ENCODE measurements at regions of chr1 and their contacts with region 1.

Region 1: GRCh38 chr1:5992026-5992813 is at the start of gene NPHP4:
- DNase-seq: peak; percentile 99 to 100
- H3K4me3 ChIP-seq: peak within 1 kb of the TSS; percentile 79 to 94
- H3K27ac ChIP-seq: peak within 1 kb of the TSS; percentile 85 to 89
- H3K4me1 ChIP-seq: peaks cover 0 to 15% of the 10 kb centered on the region in 2 donors
- H3K27me3 ChIP-seq: no peaks in the 10 kb centered on the region
- CTCF ChIP-seq: peak in 1 of 3 experiments; percentile 5
- total RNA-seq, gene NPHP4: 8.2 TPM

Region 2: GRCh38 chr1:5811419-5811818 is 180.8 kb before region 1 on chr1:
- intact Hi-C with region 1: no loop called
- DNase-seq: no peak
- H3K4me3 ChIP-seq: no peak overlapping the region
- H3K27ac ChIP-seq: no peak overlapping the region
- H3K4me1 ChIP-seq: no peaks in the 10 kb centered on the region
- H3K27me3 ChIP-seq: no peaks in the 10 kb centered on the region
- CTCF ChIP-seq: no peak

Region 3: DNA sequence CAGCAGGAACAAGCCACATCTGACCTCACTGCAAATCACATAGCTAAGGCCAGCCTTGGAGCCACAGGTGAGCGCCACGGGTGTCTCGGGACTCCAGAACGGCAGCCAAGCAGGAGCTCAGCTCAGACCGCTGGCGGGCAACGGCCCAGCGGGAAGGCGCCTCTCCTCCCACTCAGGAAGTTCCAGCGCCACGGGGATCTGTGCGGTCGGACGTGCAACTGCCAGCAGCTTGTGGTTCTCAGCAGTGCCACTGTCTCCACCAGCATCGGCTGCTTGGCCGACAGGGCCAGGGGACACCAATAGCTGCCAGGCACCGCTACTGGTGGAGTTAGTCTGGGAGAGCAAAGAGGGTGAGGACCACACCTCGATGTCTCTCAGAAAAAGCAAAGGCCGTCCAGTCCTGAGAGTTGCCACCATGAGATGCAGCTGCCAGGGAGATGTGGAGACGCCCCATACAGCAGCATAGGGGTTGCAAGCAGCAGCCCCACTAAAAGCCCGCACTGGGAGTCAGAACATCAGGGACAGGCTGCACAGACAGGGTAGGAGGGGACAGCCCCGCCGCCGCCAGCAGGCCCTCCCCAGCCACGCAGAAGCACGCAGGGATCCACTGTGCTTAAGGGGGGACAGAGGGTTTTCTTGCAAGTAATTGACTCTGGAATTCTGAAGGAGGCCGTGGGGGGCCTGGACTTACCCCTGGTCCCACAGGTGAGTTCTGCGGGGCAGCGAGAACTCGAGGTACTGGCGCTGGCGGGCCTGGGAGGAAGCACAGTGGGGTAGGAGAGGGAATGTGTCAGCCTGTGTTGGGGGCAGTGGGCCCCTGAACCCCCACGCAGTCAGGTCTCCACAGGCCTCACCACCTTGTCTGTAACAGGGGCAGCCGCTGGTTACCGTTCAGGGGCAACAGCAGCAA is 83.5 kb before region 1 on chr1:
- intact Hi-C with region 1: no loop called
- DNase-seq: no peak
- H3K4me3 ChIP-seq: no peak overlapping the region
- H3K27ac ChIP-seq: no peak overlapping the region
- H3K4me1 ChIP-seq: no peaks in the 10 kb centered on the region
- H3K27me3 ChIP-seq: no peaks in the 10 kb centered on the region
- CTCF ChIP-seq: no peak

Region 4: DNA sequence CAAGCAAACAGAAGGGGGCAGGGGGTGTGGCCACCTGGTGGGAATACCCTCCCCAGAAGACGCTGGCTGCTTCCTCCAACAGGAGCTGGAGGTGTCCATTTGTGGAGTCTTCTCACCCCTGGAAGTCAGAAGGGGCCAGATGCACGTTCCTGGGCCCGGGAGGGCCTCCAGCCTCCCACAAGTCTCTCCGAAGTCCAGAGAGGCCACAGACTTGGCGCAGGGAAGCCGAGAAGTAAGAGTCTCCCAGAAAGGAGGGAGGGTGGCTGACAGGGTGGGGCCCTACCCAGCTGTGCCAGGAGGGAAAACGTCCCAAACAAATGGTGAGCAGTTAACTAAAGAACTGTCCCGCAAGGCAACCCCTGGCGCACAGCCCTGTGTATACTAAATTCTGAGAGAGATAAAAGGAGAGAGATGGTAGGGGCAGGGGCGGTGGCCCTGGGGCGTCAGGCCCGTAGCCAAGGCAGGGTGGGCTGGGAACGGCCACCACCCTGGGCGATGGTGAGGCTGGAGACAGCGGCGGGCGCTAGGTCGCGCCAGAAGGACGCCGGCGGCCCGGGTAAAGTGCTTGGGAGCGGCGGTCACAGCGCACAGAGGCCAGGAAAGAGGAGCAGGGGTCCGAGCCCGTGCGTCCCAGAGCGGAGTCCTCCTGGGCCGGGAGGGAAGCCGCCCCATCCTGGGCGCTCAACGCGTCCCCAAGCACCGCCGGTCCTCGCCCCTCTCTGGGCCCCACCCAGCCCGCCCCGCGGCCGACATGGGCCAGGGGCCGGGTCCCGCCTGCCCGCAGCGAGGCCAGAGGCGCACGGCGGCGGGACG is 186.7 kb after region 1 on chr1:
- intact Hi-C with region 1: loop called (anchors 5 kb)
- DNase-seq: no peak
- H3K4me3 ChIP-seq: peak overlapping the region; percentile 50 to 66
- H3K27ac ChIP-seq: no peak overlapping the region
- H3K4me1 ChIP-seq: peaks cover 8 to 9% of the 10 kb centered on the region in 2 donors
- H3K27me3 ChIP-seq: no peaks in the 10 kb centered on the region
- CTCF ChIP-seq: no peak

Region 5: DNA sequence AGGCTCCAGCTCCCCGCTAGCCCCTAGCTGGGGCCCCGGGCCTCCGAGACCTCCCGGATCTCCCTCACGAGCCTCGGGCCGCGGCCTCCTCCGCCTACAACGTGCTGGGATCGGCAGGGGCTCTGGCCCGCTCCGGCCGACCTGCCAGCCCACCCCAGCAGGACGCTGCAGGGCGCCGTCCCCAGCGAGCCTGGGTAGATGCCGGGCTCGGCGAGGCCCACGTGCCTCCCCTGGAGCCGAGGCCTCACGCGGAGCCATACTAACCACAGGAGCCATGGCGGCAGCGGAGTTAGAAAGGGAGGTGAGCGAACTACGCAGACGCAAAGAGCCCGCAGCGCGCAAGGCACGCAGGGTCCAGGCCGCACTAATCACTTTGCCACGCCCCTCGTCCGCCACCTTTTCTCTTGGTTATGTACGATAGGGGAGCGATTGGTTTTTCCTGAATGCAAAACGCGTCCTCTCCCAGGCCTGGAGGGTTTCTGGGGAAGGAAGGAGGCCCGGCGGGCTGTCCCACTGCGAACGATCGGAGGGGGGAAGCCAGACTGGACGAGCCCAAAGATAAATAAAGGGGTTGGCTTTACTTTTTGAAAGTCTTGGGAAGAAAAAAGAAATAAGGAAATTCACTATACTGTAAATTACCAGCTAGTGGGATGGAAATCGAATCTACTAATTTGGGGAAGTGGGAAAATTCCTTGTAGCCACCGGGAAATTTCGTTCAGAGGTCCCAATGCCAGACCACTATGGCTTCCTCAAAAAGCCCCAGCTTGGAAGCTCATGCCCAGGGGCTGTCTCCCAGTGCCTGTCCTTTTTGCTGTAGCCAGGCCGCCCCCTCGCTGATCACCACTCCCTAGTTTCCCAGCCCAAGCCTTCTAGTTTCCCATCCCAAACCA is 207.3 kb after region 1 on chr1 and contains the start of gene RPL22:
- intact Hi-C with region 1: loop called (anchors 5 kb)
- DNase-seq: peak; percentile 91 to 99
- H3K4me3 ChIP-seq: peak within 1 kb of the TSS; percentile 77 to 86
- H3K27ac ChIP-seq: peak within 1 kb of the TSS; percentile 79 to 82
- H3K4me1 ChIP-seq: peaks cover 15 to 26% of the 10 kb centered on the region in 2 donors
- H3K27me3 ChIP-seq: no peaks in the 10 kb centered on the region
- CTCF ChIP-seq: no peak
- total RNA-seq, gene RPL22: 88.8 TPM

Region 6: DNA sequence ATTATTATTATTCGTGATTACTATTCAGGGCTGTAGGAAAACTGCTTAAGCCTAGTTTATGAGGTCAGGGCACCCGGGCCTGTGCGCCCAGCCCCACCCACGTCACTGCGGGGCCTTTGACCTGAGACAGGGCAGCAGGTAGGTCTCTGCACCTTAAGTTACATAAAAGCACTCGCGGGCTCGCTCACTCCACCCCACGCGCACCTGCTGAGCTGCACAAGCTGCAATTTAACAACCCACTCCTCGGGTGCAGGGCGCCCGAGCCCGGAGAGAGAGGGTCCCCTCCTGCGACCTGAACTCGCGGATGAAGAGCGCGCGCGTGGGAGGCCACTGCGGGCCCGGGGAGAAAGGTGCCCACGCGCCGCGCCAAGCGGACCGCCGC is 243.1 kb after region 1 on chr1:
- intact Hi-C with region 1: loop called (anchors 2 kb)
- DNase-seq: no peak
- H3K4me3 ChIP-seq: peak overlapping the region; percentile 78 to 89
- H3K27ac ChIP-seq: no peak overlapping the region
- H3K4me1 ChIP-seq: peaks cover 2 to 9% of the 10 kb centered on the region in 2 donors
- H3K27me3 ChIP-seq: no peaks in the 10 kb centered on the region
- CTCF ChIP-seq: no peak

Region 7: DNA sequence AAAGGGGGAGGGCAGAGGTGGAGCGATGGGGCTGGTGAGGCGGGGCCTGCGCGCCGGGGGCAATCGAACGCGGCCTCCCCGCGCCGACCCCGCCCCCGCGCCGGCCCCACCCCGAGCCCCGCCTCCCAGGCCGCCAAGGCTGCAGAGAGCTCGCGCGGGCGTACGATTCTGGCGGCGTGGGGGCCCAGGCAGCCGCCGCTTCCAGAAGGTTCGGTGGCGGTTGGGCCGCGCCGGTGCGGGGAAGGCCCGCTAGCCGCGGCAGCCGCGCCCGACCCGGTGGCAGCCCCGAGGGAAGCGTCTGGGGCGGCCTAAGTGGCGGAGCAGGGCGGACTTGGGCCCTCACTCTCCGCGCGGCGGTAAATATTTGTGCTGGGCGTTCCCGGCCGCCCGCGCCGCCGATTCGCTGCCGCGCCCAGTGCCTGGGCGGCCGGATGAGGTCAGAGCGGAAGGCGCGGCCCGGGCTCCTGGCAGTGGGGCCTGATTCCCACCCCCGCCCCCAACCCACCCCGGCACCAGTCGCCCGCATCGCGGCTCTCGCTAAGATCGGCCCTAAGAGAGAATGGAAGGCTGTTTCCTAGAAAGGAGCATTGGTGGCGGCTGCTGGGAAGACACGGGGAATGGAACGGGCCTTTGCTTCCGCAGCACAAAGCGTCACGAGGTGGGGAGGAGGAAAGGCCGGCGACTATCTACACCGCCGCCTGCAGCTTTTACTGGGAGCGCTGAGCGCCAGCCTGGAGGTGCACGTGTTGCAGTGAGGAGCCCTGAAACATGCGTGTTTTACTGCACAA is 401.4 kb after region 1 on chr1 and contains the start of gene ACOT7:
- intact Hi-C with region 1: loop called (anchors 1 kb)
- DNase-seq: peak; percentile 49 to 92
- H3K4me3 ChIP-seq: peak within 1 kb of the TSS; percentile 66 to 84
- H3K27ac ChIP-seq: peak within 1 kb of the TSS; percentile 95 to 99
- H3K4me1 ChIP-seq: peaks cover 4 to 13% of the 10 kb centered on the region in 2 donors
- H3K27me3 ChIP-seq: no peaks in the 10 kb centered on the region
- CTCF ChIP-seq: peak; percentile 4 to 46 (median 7)
- total RNA-seq, gene ACOT7: 16.1 TPM